ENCODE measurements at regions of chr5 and their contacts with region 1.

Region 1: DNA sequence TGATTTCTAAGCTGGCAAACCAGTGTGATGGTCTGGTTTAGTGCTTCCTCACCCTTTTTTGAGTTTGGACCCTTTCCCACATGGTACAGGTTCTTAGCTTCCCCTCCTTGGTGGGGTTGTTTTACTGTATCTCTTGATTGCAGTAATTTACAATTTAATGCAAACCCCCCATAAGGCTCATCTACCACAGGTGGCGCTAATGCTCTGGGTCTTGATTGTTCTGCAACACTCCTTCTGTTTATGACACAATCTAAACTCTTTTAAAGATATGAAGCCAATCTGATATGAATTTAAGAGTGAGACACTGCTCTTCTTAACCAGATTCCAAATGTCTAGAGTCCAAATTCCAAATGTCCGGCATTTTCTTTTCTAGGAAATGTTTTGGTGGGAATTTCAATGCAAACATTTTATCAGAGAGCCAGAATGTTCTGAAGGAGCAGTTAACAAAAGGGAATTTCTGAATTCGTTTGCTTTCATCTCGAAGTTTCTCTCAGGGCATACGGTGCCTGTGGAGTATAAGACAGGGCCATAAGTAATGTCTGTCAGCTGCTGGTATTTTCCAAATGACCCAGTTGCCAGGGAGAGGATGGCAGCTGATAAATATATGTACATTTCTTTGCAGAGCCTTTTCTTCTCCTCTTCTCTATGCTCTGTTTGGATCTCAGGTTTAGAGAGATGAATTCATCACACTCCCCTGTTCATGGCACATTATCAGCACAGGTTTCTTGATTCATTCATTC is 246.8 kb downstream of the ARHGAP26 start:
- DNase-seq: peak; percentile 77
- H3K4me3 Mint-ChIP-seq: no peak overlapping the region
- H3K27ac Mint-ChIP-seq: no peak overlapping the region
- H3K4me1 Mint-ChIP-seq: peaks cover 15% of the 10 kb centered on the region
- H3K27me3 Mint-ChIP-seq: no peaks in the 10 kb centered on the region

Region 2: DNA sequence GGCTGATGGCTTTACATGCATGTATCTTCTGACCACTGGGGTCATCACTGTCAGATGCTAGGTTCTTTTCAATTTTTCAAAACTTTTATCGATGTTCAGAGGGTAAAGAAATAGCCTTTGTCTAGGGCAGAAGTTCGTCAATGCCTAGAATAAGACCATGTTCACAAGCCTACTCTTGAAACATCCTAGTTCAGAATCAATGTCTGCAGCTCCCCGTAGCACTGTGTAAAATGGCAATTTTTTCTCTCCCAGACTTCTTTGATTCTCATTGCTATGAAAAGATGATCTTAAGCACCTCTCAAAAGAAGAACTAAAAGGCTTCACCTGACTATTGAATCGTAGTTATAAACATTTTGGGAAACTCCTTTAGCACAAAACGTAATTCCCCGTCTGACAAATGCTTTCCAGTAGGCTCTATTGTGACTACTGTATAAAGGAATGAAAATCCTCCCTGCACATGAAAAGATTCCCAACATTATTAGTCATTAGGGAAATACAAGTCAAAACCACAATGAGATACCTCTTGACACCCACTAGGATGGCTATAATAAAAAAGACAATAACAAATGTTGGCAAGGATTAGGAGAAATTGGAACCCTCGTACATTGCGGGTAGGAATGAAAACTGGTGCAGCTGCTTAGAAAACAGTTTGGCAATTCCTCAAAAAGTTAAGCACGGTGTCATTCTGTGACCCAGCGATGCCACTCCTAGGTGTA is 16.7 kb after region 1 on chr5:
- CTCF ChIA-PET with region 1: interaction called, 5 read pairs
- intact Hi-C with region 1: loop called (anchors 1 kb)
- DNase-seq: no peak
- H3K4me3 Mint-ChIP-seq: no peak overlapping the region
- H3K27ac Mint-ChIP-seq: no peak overlapping the region
- H3K4me1 Mint-ChIP-seq: peaks cover 75% of the 10 kb centered on the region
- H3K27me3 Mint-ChIP-seq: no peaks in the 10 kb centered on the region

Region 3: GRCh38 chr5:143262393-143263174 is 245.6 kb after region 1 on chr5:
- CTCF ChIA-PET with region 1: no interaction called
- intact Hi-C with region 1: no loop called
- DNase-seq: no peak
- H3K4me3 Mint-ChIP-seq: no peak overlapping the region
- H3K27ac Mint-ChIP-seq: no peak overlapping the region
- H3K4me1 Mint-ChIP-seq: peaks cover 11% of the 10 kb centered on the region
- H3K27me3 Mint-ChIP-seq: no peaks in the 10 kb centered on the region

Region 4: GRCh38 chr5:143448518-143448917 is 431.6 kb after region 1 on chr5:
- CTCF ChIA-PET with region 1: no interaction called
- intact Hi-C with region 1: loop called (anchors 5 kb)
- DNase-seq: peak; percentile 45
- H3K4me3 Mint-ChIP-seq: no peak overlapping the region
- H3K27ac Mint-ChIP-seq: no peak overlapping the region
- H3K4me1 Mint-ChIP-seq: peaks cover 20% of the 10 kb centered on the region
- H3K27me3 Mint-ChIP-seq: no peaks in the 10 kb centered on the region

Region 5: DNA sequence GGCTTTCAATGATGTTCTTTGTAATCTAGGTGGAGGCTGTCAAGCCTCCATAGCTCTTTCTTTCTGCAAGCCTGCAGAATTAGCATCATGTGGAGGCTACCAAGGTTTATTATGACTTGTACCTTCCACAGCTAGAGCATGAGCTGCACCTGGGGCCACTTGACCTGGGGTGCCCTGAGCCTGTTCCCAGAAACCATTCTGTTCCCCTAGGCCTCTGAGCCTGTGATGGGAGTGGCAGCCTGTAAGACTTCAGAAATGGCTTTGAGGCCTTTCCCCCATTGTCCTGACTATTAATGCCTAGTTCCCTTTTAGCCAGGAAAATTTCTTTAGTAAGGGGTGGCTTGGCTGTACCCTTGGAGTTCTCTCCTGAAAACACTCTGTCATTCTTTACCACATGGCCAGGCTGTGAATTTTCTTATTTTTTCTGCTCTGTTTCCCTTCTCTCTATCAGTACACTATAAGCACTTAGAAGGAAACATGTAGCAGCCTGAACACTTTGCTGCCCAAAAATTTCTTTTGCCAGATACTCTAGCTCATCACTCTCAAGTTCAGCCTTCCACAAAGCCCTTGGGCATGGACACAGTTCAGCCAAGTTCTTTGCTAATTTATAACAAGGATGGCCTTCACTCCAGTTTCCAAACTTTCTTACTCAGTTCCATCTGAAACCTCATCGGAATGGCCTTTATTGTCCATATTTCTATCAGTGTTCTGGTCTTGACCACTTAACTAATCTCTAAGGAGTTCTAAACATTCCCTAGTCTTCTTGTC is 448.0 kb after region 1 on chr5:
- CTCF ChIA-PET with region 1: no interaction called
- intact Hi-C with region 1: no loop called
- DNase-seq: no peak
- H3K4me3 Mint-ChIP-seq: no peak overlapping the region
- H3K27ac Mint-ChIP-seq: no peak overlapping the region
- H3K4me1 Mint-ChIP-seq: no peaks in the 10 kb centered on the region
- H3K27me3 Mint-ChIP-seq: no peaks in the 10 kb centered on the region

Region 6: DNA sequence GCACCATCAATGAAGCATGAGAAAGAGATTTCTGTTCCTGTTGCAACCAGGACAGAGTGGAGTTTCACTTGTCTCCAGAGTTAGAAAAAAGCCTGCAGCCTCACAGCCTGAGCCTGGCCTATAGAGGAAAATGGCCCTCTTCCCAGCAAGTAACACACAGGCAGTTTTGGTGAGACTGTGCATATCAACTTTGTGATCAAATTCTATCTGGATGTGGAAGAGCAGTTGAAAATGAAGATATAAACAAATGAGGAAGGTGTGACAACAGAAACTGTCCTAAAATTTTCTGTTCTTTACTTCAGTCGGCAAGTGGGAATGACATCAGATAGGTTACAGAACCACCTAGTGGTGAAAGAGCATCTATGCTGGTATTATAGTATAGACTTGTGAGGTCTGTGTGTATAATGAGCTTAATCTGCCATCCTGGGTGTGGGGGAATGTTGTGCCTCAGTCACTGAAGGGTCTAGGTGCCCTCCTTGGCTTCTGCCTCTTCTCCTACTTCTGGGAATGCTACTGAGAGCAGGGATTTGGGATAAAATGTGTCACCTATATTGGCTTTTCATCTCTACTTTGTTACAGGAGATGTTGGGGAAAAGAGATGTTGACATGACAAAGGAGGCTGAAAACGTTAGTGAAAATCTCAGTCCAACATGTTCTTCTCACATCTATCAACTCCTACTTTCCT is 1125.3 kb after region 1 on chr5:
- CTCF ChIA-PET with region 1: no interaction called
- intact Hi-C with region 1: loop called (anchors 5 kb)
- DNase-seq: no peak
- H3K4me3 Mint-ChIP-seq: no peak overlapping the region
- H3K27ac Mint-ChIP-seq: no peak overlapping the region
- H3K4me1 Mint-ChIP-seq: peaks cover 2% of the 10 kb centered on the region
- H3K27me3 Mint-ChIP-seq: no peaks in the 10 kb centered on the region

Measured in activated naive CD4-positive, alpha-beta T cell treated with anti-CD3 and anti-CD28 coated beads for 36 hours (primary cell).